Dorsolateral prefrontal cortex (tissue), 120 donors: ENCODE measurements at regions of chr7 and their contacts with region 1.

Region 1: DNA sequence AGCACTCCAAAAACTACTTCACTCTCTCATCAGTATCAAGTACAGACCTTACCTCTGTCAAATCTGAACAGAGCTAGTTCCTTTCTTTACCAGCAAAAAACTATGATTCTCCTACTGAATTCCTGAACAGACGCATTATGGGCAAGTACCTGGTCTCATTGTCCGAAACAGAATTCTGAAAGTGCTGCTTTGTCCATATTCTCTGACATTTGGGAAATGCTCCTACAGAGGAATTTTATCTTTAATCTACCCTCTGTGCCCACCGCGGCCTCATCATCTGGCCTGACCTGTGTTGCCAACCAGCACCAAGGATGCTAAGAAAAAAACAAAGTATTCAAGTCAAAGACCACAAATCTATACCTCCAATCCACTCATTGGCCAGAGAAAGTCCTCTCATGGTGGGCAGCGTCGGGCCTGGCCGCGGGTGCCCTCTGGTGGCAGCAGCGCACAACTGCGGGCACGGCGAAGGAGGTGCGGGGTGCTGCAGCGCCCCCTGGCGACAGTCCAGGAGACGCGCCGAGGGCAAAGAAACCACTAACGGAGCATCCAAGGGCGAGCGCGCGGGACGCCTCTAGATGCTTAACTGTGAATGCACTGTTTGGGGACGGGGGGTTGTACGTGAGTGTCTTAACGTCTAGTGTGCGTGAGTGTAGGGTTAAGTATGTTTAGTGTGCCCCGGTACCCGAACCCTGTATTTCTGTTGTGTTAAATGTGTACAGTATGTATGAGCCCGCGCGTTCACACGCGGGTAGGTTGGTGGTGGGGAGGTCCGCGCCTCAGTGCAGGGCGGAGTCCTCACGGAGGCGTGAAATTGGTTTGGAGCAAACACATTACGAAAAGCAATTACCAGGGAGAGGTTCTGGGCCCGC is 5.0 kb upstream of the GBX1 start:
- DNase-seq: peak; percentile 64 to 87 (median 76)
- H3K4me3 ChIP-seq: peak overlapping the region in 1 of 59 donors; percentile 5
- H3K27ac ChIP-seq: no peak overlapping the region
- H3K27me3 ChIP-seq: peaks cover 0 to 42% (median 9%) of the 10 kb centered on the region in 45 donors
- CTCF ChIP-seq: peak; percentile 98 to 100 (median 100)

Region 2: GRCh38 chr7:151028131-151028947 is 144.2 kb before region 1 on chr7 and contains the start of gene ABCB8:
- intact Hi-C with region 1: loop called in 1 of 2 experiments (anchors 5 kb)
- DNase-seq: peak; percentile 92 to 99 (median 97)
- H3K4me3 ChIP-seq: peak within 1 kb of the TSS; percentile 64 to 98 (median 84)
- H3K27ac ChIP-seq: peak within 1 kb of the TSS; percentile 39 to 96 (median 89)
- H3K27me3 ChIP-seq: peaks cover 0 to under 1% (median 0%) of the 10 kb centered on the region in 45 donors
- CTCF ChIP-seq: peak; percentile 23 to 83 (median 62)
- total RNA-seq, gene ABCB8: 52.6 to 110 (median 74.3) TPM

Region 3: GRCh38 chr7:151104411-151105235 is 67.9 kb before region 1 on chr7:
- intact Hi-C with region 1: no loop called
- DNase-seq: peak in 1 of 10 donors; percentile 34
- H3K4me3 ChIP-seq: no peak overlapping the region
- H3K27ac ChIP-seq: peak overlapping the region in 5 of 59 donors; percentile 1 to 56 (median 27)
- H3K27me3 ChIP-seq: no peaks in the 10 kb centered on the region
- CTCF ChIP-seq: no peak

Region 4: GRCh38 chr7:151123822-151124464 is 48.6 kb before region 1 on chr7:
- intact Hi-C with region 1: loop called (anchors 1 to 2 kb)
- DNase-seq: peak; percentile 73 to 93 (median 86)
- H3K4me3 ChIP-seq: no peak overlapping the region
- H3K27ac ChIP-seq: peak overlapping the region in 14 of 59 donors; percentile 4 to 55 (median 22)
- H3K27me3 ChIP-seq: no peaks in the 10 kb centered on the region
- CTCF ChIP-seq: peak; percentile 83 to 100 (median 99)

Region 5: DNA sequence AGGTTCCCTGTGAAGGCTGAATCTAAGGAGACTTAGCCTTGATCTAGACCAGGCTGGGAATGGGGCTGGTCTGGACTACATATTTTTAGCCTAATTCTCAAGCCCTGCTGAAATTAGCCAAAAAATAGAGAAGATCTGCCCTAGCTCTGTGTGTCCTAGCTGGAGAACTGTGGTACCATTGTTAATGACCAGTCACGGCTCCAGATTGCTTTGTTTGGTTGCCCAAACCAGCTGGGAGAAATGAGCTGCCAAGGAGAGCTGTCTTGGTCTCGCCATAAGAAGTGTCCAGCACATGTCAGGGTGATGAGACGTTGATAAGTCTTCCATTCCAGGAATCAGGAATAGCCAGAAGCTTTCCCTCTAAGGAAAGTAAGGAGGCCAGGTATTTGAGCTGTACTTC is 25.7 kb before region 1 on chr7:
- intact Hi-C with region 1: loop called in 1 of 2 experiments (anchors 2 kb)
- DNase-seq: peak in 4 of 10 donors; percentile 49 to 74 (median 60)
- H3K4me3 ChIP-seq: no peak overlapping the region
- H3K27ac ChIP-seq: peak overlapping the region in 42 of 59 donors; percentile 1 to 87 (median 60)
- H3K27me3 ChIP-seq: peaks cover 0 to 4% (median 0%) of the 10 kb centered on the region in 45 donors
- CTCF ChIP-seq: peak in 1 of 56 donors; percentile 9

Region 6: GRCh38 chr7:151304856-151305255 is 132.3 kb after region 1 on chr7:
- intact Hi-C with region 1: loop called in 1 of 2 experiments (anchors 2 kb)
- DNase-seq: no peak
- H3K4me3 ChIP-seq: peak overlapping the region in 1 of 59 donors; percentile 28
- H3K27ac ChIP-seq: no peak overlapping the region
- H3K27me3 ChIP-seq: peaks cover 0 to 42% (median 4%) of the 10 kb centered on the region in 45 donors
- CTCF ChIP-seq: no peak

Region 7: DNA sequence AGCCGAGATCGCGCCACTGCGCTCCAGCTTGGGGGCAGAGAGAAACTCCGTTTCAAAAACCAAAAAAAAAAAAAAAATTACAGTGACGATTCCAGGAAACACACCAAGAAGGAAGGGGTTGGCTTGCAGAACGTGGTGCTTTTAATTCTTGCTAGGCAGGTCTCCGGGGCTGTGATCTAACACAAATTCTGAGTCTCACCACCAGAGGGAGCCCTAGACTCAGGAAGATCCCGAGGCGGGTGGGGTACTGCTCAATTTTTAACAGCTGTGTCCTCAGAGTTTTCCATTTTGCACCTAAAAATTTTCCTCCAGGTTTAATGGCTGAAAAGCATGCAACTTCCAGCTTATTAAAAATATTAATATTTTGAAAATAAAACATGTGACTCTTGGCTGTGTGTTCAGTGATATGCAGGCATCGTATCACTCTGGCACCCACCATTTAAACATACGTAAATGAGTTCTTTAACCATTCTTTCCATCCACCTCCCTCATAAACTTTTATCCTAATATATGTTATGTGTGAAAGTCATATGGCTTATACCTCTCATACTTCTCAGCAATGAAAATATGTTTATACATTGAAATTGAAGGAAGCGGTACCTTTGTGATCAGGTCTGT is 142.6 kb after region 1 on chr7:
- intact Hi-C with region 1: loop called in 1 of 2 experiments (anchors 2 kb)
- DNase-seq: peak; percentile 33 to 80 (median 63)
- H3K4me3 ChIP-seq: peak overlapping the region in 12 of 59 donors; percentile 3 to 35 (median 16)
- H3K27ac ChIP-seq: no peak overlapping the region
- H3K27me3 ChIP-seq: no peaks in the 10 kb centered on the region
- CTCF ChIP-seq: peak; percentile 70 to 96 (median 90)